BJ (cell line): ENCODE measurements at regions of chr12 and their contacts with region 1.

Region 1: DNA sequence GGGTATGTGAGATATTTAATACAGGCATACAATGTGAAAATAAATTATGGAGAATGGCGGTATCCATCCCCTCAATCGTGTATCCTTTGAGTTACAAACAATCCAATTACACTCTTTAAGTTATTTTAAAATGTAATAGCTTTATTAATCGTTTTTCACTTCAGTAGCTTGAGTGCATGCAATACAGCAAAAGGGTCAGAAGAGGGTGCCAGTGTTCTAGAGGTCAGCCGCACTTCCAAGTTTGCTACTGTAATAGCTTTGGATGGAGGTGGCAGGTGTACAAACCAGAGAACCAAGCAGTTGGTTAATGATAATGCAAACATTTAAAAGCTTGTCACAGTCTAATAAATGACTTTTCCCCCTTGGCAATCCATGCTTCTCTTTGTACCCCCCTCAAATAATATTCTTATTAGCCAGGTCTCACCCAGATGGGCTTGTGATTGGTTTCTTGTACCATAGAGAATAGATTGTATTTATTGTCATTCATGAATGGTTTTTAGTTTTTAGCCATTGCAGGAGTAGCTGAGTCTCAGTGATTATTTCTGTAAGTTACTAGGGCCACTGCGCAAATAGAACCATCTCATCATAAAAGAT is 127.0 kb downstream of the ERC1 start:
- DNase-seq: no peak
- H3K4me3 ChIP-seq: no peak overlapping the region
- H3K27me3 ChIP-seq: no peaks in the 10 kb centered on the region
- CTCF ChIP-seq: peak; percentile 88

Region 2: DNA sequence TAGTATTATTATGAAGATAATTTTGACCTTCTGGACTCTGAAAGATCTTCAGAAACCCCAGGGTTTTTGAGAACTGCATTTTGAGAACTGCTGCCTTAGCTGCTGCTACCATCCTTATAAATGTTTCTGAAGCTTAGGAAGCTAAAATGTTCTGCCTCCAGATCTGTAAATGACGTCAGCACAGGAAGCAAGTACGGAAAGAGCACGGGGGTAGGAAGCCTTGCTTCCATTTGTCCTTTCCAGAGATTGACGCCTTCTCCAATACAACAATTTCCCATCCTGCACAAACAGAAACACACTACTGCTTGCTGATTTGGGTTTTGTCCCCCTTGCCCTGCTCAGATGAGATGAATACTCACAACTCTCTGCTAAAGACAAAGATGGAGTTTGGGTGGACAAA is 186.5 kb before region 1 on chr12:
- CTCF ChIA-PET with region 1: no interaction called
- POLR2A ChIA-PET with region 1: no interaction called
- DNase-seq: no peak
- H3K4me3 ChIP-seq: no peak overlapping the region
- H3K27me3 ChIP-seq: no peaks in the 10 kb centered on the region
- CTCF ChIP-seq: no peak

Region 3: DNA sequence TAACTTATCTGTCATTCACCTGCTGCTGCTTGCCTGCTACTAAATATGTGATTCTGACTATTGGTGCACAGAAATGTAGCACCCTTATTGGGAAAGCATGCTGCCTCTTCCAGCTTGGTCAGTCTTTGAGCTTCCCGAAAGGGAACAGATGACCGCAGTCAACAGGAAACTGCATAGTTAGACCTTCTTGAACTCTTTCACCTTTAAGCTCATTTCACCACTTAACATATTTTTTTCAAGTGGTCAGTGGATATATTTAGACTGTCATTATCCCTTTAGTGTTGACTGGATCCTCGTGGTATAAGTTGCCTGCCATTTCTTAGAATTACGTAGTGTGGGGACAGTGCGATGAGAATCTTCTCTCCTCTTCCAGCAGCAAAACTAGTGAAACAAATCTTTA is 251.4 kb after region 1 on chr12:
- CTCF ChIA-PET with region 1: interaction called, 11 read pairs
- POLR2A ChIA-PET with region 1: no interaction called
- DNase-seq: no peak
- H3K4me3 ChIP-seq: no peak overlapping the region
- H3K27me3 ChIP-seq: no peaks in the 10 kb centered on the region
- CTCF ChIP-seq: no peak

Region 4: GRCh38 chr12:1576410-1577241 is 458.6 kb after region 1 on chr12:
- CTCF ChIA-PET with region 1: interaction called, 85 read pairs
- POLR2A ChIA-PET with region 1: no interaction called
- DNase-seq: no peak
- H3K4me3 ChIP-seq: no peak overlapping the region
- H3K27me3 ChIP-seq: no peaks in the 10 kb centered on the region
- CTCF ChIP-seq: no peak

Region 5: DNA sequence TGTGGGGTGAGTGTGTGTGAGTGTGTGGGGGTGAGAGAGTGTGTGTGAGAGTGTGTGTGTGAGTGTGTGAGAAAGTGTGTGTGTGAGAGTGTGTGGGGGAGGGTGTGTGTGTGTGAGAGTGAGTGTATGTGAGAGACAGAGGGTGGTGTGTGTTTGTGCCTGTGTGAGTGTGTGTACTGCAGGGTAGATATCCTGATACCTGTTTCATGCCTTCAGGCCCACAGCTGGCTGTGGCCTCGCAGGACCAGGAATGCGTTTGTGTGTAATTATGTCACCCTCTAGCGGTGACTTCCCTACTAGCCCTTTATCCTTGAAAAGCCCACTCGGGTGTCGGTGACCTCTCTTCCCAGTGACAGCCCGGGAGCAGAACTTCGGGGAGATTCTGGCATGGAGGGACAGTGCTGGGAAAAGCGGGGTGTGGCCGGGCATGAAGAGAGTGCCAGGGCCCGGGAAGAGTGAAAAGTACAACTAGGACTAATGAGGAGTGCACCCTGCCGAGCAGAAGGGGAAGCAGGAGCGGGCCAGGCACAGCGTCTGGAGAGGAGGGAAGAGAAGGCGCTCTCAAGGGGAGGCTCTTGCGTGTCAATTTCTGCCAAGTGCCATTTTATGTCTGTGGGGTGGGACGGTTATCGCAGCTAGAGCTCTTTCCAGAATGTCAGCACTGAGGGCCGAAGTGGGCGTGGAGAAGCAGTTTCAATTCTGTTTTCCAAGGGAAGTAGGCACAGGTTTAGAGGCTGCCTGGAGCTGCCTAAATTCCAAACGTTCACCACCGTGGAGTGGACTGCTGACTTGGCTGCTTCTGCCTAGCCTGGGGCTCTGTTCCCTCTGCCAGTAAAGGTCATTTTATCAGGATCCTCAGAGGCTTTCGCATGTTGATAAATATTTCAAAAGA is 487.3 kb after region 1 on chr12:
- CTCF ChIA-PET with region 1: interaction called, 18 read pairs
- POLR2A ChIA-PET with region 1: no interaction called
- DNase-seq: no peak
- H3K4me3 ChIP-seq: peak overlapping the region; percentile 36
- H3K27me3 ChIP-seq: no peaks in the 10 kb centered on the region
- CTCF ChIP-seq: peak; percentile 77